Heart right ventricle (tissue), 16 donors: ENCODE measurements at regions of chr1 and their contacts with region 1.

Region 1: GRCh38 chr1:112390775-112391602 is 5.0 kb upstream of the CTTNBP2NL start:
- DNase-seq: peak; percentile 77 to 92
- ATAC-seq: peak; percentile 76 to 90 (median 82)
- H3K4me3 ChIP-seq: peak overlapping the region; percentile 5 to 61 (median 52)
- H3K27ac ChIP-seq: peak overlapping the region; percentile 58 to 97 (median 88)
- H3K4me1 ChIP-seq: peaks cover 0 to 73% (median 50%) of the 10 kb centered on the region in 9 donors
- H3K27me3 ChIP-seq: no peaks in the 10 kb centered on the region
- CTCF ChIP-seq: peak; percentile 92 to 97 (median 95)

Region 2: GRCh38 chr1:112466078-112466660 is 75.2 kb after region 1 on chr1:
- intact Hi-C with region 1: loop called (anchors 1 to 5 kb)
- DNase-seq: peak; percentile 94 to 97
- ATAC-seq: peak; percentile 93 to 98 (median 94)
- H3K4me3 ChIP-seq: peak overlapping the region in 9 of 10 donors; percentile 12 to 59 (median 49)
- H3K27ac ChIP-seq: peak overlapping the region; percentile 4 to 84 (median 74)
- H3K4me1 ChIP-seq: peaks cover 3 to 33% (median 18%) of the 10 kb centered on the region in 9 donors
- H3K27me3 ChIP-seq: no peaks in the 10 kb centered on the region
- CTCF ChIP-seq: peak; percentile 77 to 97 (median 90)

Region 3: DNA sequence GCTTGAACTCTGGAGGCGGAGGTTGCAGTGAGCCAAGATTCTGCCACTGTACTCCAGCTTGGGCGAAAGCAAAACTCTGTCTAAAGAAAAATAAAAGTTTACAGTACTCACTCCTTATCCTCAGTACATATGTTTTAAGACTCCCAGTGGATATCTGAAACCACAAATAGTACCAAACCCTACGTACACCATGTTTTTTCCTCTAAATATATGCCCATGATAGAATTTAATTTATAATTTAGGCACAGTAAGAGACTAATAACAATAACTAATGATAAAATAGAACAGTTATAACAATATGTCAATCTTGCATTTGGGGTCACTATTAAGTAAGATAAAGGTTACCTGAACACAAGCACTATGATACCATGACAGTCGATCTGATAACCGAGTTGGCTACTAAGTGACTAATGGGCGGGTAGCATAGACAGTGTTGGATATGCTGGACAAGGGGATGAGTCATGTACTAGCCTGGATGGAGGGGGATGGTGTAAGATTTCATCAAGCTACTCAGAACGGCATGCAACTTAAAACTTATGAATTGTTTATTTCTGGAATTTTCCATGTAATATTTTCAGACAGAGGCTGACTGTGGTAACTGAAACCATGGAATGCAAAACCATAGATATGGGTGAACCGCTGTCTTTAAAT is 184.3 kb after region 1 on chr1:
- intact Hi-C with region 1: no loop called
- DNase-seq: no peak
- ATAC-seq: no peak
- H3K4me3 ChIP-seq: no peak overlapping the region
- H3K27ac ChIP-seq: no peak overlapping the region
- H3K4me1 ChIP-seq: no peaks in the 10 kb centered on the region
- H3K27me3 ChIP-seq: no peaks in the 10 kb centered on the region
- CTCF ChIP-seq: no peak

Region 4: GRCh38 chr1:112619520-112620376 is 228.8 kb after region 1 on chr1 and contains the start of gene CAPZA1:
- intact Hi-C with region 1: loop called in 6 of 10 experiments (anchors 2 to 10 kb)
- DNase-seq: peak; percentile 90 to 92
- ATAC-seq: peak; percentile 95 to 98 (median 97)
- H3K4me3 ChIP-seq: peak within 1 kb of the TSS; percentile 57 to 98 (median 83)
- H3K27ac ChIP-seq: peak within 1 kb of the TSS; percentile 91 to 100 (median 98)
- H3K4me1 ChIP-seq: peaks cover 3 to 66% (median 53%) of the 10 kb centered on the region in 9 donors
- H3K27me3 ChIP-seq: no peaks in the 10 kb centered on the region
- CTCF ChIP-seq: peak in 1 of 9 donors; percentile 10
- total RNA-seq, gene CAPZA1: 19.5 to 58.3 (median 23.2) TPM

Region 5: DNA sequence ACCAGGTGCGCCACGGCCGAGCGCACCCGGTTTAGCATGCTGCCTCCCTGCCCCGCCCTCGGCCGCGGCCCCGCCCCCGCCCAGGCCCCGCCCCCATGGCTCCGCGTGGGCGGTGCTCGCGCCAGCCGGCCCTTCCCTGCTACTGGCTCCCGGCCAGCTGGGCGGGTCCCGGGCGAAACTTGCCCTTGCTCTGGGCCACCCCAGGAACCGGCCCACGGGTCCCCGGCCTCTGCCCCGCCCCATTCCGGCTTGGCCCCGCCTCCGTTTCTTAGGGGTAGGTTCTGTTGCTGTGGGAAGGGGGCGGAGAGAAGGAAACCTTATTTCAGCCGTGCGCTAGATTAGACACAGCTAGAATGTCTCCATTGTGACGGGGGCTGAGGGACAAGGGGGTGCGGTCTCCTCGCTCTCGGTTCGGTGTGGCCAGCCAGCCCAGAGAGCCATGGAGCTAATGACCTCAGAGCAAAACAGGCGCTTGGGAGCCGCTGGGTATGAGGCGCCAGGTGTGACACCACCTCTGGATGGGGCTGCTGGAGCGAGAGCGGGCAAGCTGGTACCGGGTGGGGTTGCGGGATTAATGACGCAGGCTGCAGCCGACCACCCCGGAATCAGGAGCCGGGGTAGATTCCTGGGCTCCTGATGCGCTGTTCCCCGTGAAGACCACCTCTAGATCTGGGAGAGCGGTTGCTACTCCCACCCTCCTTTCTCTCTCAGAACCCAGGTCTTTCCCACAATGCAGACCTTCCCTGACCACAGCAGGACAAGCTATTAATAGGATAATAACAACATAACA is 324.5 kb after region 1 on chr1 and contains the start of gene PPM1J:
- intact Hi-C with region 1: loop called in 1 of 10 experiments (anchors 5 kb)
- DNase-seq: peak; percentile 98 to 99
- ATAC-seq: peak; percentile 87 to 96 (median 91)
- H3K4me3 ChIP-seq: peak within 1 kb of the TSS; percentile 55 to 81 (median 71)
- H3K27ac ChIP-seq: peak within 1 kb of the TSS in 9 of 10 donors; percentile 67 to 88 (median 78)
- H3K4me1 ChIP-seq: peaks cover 2 to 35% (median 23%) of the 10 kb centered on the region in 9 donors
- H3K27me3 ChIP-seq: peaks cover 0 to 30% (median 12%) of the 10 kb centered on the region in 7 donors
- CTCF ChIP-seq: peak in 1 of 9 donors; percentile 2
- total RNA-seq, gene PPM1J: 5.8 to 11.0 (median 8.5) TPM